Activated CD8-positive, alpha-beta T cell treated with anti-CD3 and anti-CD28 coated beads for 36 hours (primary cell): ENCODE measurements at regions of chr2 and their contacts with region 1.

Region 1: GRCh38 chr2:42086500-42086953 is 38.7 kb downstream of the PKDCC start:
- DNase-seq: peak; percentile 50
- ATAC-seq: peak; percentile 75
- H3K4me3 Mint-ChIP-seq: no peak overlapping the region
- H3K27ac Mint-ChIP-seq: no peak overlapping the region
- H3K4me1 Mint-ChIP-seq: peaks cover 8% of the 10 kb centered on the region
- H3K27me3 Mint-ChIP-seq: no peaks in the 10 kb centered on the region
- CTCF ChIP-seq: peak; percentile 83

Region 2: DNA sequence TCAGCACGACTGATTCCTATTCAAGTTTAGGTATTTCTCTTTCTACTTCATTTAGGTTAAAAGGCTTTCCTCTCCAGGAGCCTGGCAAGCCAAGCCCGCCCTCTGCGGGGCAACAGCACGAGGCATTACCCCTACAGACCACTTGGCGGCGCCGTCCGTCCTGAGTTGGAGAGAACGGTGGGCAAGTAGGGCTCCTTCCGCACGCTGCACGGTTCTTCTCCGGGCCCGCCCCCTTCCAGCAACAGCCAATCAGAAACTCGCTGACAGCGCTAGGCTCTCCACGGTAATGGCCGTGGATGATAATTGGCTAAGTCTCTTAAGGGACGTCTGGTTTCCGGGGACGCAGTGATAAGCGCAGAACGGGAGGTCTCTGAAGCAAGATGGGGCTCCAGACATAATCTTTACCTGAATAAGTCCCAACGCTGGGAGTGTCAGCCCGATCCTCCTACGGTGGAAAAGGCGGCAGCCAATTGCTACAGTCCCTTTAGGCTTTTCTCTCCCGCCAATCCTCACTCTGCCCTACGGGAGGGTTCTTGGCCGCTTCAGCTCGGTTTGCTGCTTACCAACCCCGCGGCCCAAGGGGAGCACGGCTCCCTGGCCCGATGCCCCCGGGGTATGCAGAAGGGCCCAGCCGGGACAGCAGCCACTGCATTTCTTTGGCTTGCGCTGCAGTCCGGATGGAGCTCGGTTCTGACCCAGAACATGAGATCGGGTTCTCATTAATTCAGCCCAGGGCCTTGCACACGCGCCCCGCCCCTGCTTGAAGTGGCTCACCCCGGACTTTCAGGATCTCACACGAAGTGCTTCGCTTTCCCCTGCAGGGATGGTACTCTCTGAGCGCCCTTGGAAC is 245.6 kb before region 1 on chr2:
- CTCF ChIA-PET with region 1: interaction called, 52 read pairs
- POLR2A ChIA-PET with region 1: interaction called, 3 read pairs
- intact Hi-C with region 1: loop called (anchors 2 kb)
- DNase-seq: peak; percentile 98
- ATAC-seq: peak; percentile 99
- H3K4me3 Mint-ChIP-seq: peak overlapping the region; percentile 89
- H3K27ac Mint-ChIP-seq: peak overlapping the region; percentile 92
- H3K4me1 Mint-ChIP-seq: peaks cover 6% of the 10 kb centered on the region
- H3K27me3 Mint-ChIP-seq: peaks cover 7% of the 10 kb centered on the region
- CTCF ChIP-seq: peak; percentile 87

Region 3: DNA sequence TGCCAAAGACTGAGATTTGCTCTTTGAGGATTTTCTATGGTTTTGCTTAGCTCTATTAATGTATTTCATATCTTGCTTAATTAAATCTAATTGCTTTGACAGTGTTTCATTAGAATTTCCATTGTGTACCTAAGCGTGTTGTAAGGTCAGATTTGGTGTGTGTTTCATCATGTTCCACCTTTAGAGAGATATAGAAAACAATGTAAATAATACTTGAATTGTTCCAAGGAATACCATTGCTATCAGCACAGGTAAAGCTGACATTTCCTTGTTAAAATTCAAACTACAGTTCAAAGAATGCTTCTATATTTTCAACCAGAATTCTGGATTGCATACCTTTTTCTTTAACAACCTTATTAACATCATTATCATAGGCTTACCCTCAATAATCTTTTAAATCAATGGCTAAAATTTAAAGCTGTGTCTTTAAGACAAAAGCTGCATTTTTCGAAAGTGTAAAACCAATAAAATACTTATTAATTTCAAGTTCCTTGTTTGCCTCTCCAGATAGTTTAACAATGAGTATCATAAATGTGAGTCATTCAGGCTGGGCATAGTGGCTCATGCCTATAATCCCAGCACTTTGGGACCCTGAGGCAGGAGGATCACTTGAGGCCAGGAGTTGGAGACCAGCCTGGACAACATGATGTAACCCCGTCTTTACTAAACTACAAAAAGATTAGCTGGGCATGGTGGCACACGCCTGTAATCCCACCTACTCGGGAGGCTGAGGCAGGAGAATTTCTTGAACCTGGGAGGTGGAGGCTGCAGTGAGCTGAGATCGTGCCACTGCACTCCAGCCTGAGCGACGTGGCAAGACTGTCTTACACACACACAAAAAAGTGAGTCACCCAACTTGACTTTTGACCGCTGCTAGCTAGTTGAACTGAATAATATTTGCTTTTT is 226.7 kb before region 1 on chr2:
- CTCF ChIA-PET with region 1: interaction called, 65 read pairs
- POLR2A ChIA-PET with region 1: interaction called, 3 read pairs
- intact Hi-C with region 1: no loop called
- DNase-seq: no peak
- ATAC-seq: no peak
- H3K4me3 Mint-ChIP-seq: no peak overlapping the region
- H3K27ac Mint-ChIP-seq: no peak overlapping the region
- H3K4me1 Mint-ChIP-seq: no peaks in the 10 kb centered on the region
- H3K27me3 Mint-ChIP-seq: peaks cover 4% of the 10 kb centered on the region
- CTCF ChIP-seq: no peak

Region 4: GRCh38 chr2:41879235-41879916 is 207.2 kb before region 1 on chr2:
- CTCF ChIA-PET with region 1: interaction called, 361 read pairs
- POLR2A ChIA-PET with region 1: no interaction called
- intact Hi-C with region 1: no loop called
- DNase-seq: no peak
- ATAC-seq: no peak
- H3K4me3 Mint-ChIP-seq: no peak overlapping the region
- H3K27ac Mint-ChIP-seq: no peak overlapping the region
- H3K4me1 Mint-ChIP-seq: no peaks in the 10 kb centered on the region
- H3K27me3 Mint-ChIP-seq: peaks cover 10% of the 10 kb centered on the region
- CTCF ChIP-seq: no peak

Region 5: DNA sequence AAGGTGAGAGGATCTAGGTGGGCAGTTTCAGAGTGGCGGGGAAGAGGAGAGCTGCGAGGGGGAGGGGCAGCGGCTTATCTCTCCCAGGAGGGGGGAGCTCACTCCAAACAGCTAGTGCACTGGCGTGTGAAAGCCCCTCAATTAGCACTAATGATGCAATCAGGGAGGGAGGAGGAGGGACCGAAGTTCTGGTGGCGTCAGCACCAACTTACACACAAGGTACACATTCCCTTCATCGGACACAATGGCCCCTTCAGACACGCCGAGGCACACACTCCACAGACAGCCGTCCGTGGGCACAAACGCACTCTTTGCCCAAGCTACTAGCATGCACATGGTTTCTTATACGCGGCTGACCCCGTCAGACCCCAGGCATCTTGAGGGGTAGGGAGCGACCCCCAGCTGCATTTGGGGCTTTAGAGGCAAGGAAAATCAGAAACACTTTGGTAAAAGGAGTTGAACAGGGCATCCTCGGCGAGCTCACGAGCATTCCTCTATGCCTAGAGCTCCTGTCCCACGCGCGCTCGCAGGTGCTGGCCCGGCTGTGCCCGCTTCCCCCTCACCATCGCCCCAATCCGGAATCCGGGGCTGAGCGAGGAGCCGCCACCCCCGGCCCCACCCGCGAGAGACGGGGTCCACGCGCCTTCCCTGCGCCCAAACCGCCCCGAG is 39.6 kb before region 1 on chr2:
- CTCF ChIA-PET with region 1: interaction called, 13 read pairs
- POLR2A ChIA-PET with region 1: no interaction called
- intact Hi-C with region 1: no loop called
- DNase-seq: no peak
- ATAC-seq: peak; percentile 21
- H3K4me3 Mint-ChIP-seq: peak overlapping the region; percentile 33
- H3K27ac Mint-ChIP-seq: no peak overlapping the region
- H3K4me1 Mint-ChIP-seq: peaks cover 6% of the 10 kb centered on the region
- H3K27me3 Mint-ChIP-seq: peaks cover 42% of the 10 kb centered on the region
- CTCF ChIP-seq: no peak

Region 6: GRCh38 chr2:42328148-42328833 is 241.8 kb after region 1 on chr2:
- CTCF ChIA-PET with region 1: interaction called, 22 read pairs
- POLR2A ChIA-PET with region 1: no interaction called
- intact Hi-C with region 1: loop called (anchors 10 kb)
- DNase-seq: no peak
- ATAC-seq: no peak
- H3K4me3 Mint-ChIP-seq: no peak overlapping the region
- H3K27ac Mint-ChIP-seq: peak overlapping the region; percentile 28
- H3K4me1 Mint-ChIP-seq: peaks cover 13% of the 10 kb centered on the region
- H3K27me3 Mint-ChIP-seq: no peaks in the 10 kb centered on the region
- CTCF ChIP-seq: peak; percentile 67